ENCODE measurements at regions of chr1 and their contacts with region 1.

Region 1: DNA sequence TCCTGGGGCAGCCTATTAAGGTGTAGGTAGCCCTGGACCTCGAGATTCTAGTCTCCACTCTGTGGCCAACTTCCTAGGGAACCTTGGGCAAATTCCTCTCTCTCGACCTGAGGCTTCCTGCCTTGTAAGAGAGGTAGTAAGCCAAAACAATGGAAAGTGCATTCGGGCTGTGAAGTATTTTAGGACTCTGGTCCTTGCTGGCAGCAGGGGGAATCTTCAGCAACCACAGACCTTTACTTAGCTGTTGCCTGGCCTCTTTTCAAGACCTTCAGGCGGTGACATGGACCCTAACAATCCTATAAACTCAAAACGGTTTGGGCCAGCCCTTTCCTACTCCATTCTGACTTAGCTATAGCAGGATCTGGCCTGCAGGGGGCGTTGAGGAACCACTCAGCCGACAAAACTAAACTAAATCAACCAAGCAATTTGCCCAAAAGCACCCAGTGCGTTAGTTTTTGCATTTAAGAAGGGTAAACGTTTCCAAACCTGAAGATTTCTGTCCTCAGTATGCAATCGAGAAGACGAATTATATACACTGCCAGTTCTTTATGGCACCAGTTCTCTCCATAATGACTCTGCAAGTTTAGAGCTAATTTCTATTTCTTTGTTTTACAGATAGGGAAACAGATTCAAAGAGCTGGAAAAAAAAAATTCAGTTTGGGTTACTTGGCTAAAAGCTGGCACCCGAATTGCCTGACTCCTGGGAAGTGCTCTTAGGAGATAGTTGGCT is 10.9 kb upstream of the SESN2 start:
- DNase-seq: peak; percentile 75
- H3K4me3 Mint-ChIP-seq: peak overlapping the region; percentile 84
- H3K27ac Mint-ChIP-seq: peak overlapping the region; percentile 95
- H3K4me1 Mint-ChIP-seq: peaks cover 54% of the 10 kb centered on the region
- H3K27me3 Mint-ChIP-seq: no peaks in the 10 kb centered on the region

Region 2: DNA sequence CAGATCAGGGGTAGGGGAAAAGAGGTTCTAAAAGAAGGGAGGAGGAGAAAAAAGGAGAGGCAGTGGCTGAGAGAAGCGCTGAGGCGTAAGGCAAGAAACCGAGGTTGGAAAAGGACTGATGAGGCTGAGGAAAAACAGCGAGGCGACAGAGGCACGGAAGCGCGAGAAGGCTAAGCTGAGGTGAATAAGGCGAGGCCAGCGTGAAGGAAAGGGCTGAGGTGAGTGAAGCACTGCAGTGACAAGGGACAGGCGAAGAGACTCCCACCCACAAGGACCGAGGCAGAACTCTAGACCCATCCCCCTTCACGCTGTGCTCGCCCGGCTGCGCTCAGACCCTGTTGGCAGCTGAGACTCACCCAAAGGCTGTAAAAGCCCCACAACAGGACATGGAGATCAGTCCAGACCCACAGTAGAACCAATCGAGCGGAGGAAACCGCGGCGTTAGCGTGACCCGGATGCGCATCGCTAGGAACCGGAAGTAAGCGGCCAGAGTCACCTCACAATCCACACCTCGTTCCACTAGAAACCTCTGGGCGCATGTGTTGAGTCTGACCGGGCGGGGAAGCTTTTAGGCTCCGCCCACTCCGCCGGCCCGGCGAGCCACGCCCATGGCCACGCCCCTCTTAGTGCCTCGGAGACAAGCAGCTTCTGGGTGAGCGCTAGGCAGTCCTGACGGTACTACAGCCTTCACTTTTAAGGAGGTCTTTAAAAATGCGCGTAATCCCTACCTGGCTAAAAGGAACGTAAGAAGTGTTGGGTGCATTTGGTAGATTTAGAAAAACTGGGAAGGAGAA is 160.1 kb before region 1 on chr1 and contains the start of gene EYA3:
- intact Hi-C with region 1: loop called (anchors 1 kb)
- DNase-seq: peak; percentile 100
- H3K4me3 Mint-ChIP-seq: peak within 1 kb of the TSS; percentile 99
- H3K27ac Mint-ChIP-seq: peak within 1 kb of the TSS; percentile 95
- H3K4me1 Mint-ChIP-seq: peaks cover 35% of the 10 kb centered on the region
- H3K27me3 Mint-ChIP-seq: peaks cover 5% of the 10 kb centered on the region
- total RNA-seq, gene EYA3: 32.2 and 35.5 TPM in 2 replicates

Region 3: GRCh38 chr1:28235755-28236655 is 12.4 kb before region 1 on chr1 and contains the start of gene ATP5IF1:
- intact Hi-C with region 1: loop called (anchors 1 kb)
- DNase-seq: peak; percentile 94
- H3K4me3 Mint-ChIP-seq: no peak within 1 kb of the TSS
- H3K27ac Mint-ChIP-seq: no peak within 1 kb of the TSS
- H3K4me1 Mint-ChIP-seq: peaks cover 11% of the 10 kb centered on the region
- H3K27me3 Mint-ChIP-seq: no peaks in the 10 kb centered on the region
- total RNA-seq, gene ATP5IF1: 128 and 132 TPM in 2 replicates

Region 4: GRCh38 chr1:28266920-28267322 is 18.5 kb after region 1 on chr1:
- intact Hi-C with region 1: no loop called
- DNase-seq: no peak
- H3K4me3 Mint-ChIP-seq: no peak overlapping the region
- H3K27ac Mint-ChIP-seq: no peak overlapping the region
- H3K4me1 Mint-ChIP-seq: peaks cover 10% of the 10 kb centered on the region
- H3K27me3 Mint-ChIP-seq: no peaks in the 10 kb centered on the region

Region 5: DNA sequence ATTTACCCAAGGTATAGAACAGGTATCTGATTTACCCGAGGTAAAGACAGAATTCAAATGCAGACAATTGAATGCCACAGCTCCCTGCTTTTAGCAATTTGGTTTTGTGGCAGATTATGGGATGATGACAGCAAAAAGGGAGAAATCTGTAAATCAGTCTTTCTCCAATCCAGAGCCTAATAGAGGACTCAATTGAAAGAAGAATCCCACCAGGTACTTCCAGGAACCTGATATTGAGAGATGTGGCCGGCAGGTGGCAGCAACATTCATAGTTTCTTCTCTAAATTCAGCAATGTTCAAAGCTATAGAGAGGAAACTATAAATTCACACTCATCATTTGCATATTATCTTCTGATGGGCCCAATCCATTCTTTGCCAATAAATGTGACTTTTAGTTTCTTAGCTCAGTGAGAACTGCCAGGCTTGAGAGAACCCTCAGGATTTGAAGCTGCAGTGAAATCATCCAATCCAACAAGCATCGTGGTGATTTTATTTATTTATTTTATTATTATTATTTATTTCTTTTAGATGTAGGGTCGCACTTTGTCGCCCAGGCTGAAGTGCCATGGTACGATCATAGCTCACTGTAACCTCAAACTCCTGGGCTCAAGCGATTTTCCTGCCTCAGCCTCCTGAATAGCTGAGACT is 111.3 kb after region 1 on chr1:
- intact Hi-C with region 1: loop called (anchors 1 kb)
- DNase-seq: peak; percentile 50
- H3K4me3 Mint-ChIP-seq: no peak overlapping the region
- H3K27ac Mint-ChIP-seq: no peak overlapping the region
- H3K4me1 Mint-ChIP-seq: no peaks in the 10 kb centered on the region
- H3K27me3 Mint-ChIP-seq: peaks cover 3% of the 10 kb centered on the region

Region 6: GRCh38 chr1:28505406-28506187 is 257.1 kb after region 1 on chr1 and contains the start of gene RCC1:
- intact Hi-C with region 1: loop called (anchors 2 kb)
- DNase-seq: peak; percentile 96
- H3K4me3 Mint-ChIP-seq: peak within 1 kb of the TSS; percentile 100
- H3K27ac Mint-ChIP-seq: peak within 1 kb of the TSS; percentile 97
- H3K4me1 Mint-ChIP-seq: peaks cover 32% of the 10 kb centered on the region
- H3K27me3 Mint-ChIP-seq: peaks cover 7% of the 10 kb centered on the region
- total RNA-seq, gene RCC1: 130 and 135 TPM in 2 replicates

Region 7: DNA sequence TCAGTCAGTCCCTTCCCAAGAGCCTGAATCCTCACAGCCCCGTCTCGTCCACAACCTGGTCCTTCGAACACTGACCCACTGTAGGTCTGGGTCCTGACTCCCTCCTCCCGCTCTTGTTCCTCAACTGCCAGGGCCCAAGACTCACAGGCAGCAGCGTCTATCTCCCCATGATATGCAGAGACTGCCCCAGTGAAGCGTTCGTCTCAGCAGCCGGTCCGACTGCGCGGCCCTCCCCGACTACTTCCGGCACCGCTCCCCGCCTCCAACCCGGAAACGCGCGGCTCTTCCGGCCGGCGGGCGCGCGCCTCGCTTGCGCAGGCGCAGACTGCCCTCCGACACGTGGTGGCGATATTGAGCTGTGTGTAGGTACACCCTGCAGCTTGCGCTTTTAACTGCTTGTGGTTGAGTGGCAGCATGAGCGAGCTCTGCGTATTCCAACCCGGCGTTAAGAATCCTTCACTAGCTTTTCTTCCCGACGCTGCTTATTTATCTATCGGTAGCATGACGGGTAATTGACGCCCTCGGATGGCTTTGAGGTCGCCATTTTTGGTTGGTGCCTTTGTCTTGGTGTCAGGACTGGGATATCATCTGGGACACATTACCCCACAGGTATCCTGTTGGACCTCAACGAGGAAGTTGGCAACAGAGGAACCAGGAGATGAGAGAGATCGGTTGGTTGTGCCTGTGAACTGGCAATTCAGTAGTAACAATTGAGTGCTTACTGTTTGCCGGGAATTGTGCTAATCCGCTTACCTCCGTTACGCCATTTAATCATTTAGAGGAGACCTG is 394.6 kb after region 1 on chr1 and contains the start of gene TAF12:
- intact Hi-C with region 1: loop called (anchors 5 kb)
- DNase-seq: peak; percentile 85
- H3K4me3 Mint-ChIP-seq: peak within 1 kb of the TSS; percentile 99
- H3K27ac Mint-ChIP-seq: peak within 1 kb of the TSS; percentile 99
- H3K4me1 Mint-ChIP-seq: peaks cover 55% of the 10 kb centered on the region
- H3K27me3 Mint-ChIP-seq: no peaks in the 10 kb centered on the region
- total RNA-seq, gene TAF12: 32.8 and 33.9 TPM in 2 replicates

Measured in activated T-helper 1 cell treated with anti-CD3 and anti-CD28 coated beads, Interleukin-12 subunit alpha, Interleukin-12 subunit beta, Interleukin-2, Interleukin-4 antibody, amounts not matched to agents 30 ng/mL and 10 ng/mL and 1 ng/mL, durations not matched to agents 14 hours and 24 hours and 36 hours (primary cell).